Posterior cingulate gyrus (tissue), 11 donors: ENCODE measurements at regions of chr3 and their contacts with region 1.

Region 1: DNA sequence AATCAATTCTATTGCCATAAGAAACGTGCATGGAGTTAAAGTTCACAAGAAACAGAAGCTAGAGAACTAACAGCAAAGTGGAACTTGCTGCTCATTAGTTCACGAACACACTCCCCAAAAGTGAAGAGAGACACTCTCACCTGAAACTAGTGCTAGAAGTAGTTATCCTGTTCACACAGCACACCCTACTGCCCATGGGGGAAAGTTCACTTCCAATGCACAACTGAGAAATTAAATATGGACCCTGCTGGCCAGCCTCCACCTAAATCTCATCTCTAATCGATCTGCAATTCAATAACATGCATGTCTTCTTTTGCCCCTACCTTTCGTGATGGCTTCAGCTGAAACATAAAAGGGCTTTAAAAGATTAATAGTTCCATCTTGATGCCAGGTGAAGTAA is 39.4 kb upstream of the FRMD4B start:
- DNase-seq: peak in 1 of 10 donors; percentile 36

Region 2: GRCh38 chr3:69120879-69121464 is 304.3 kb before region 1 on chr3:
- intact Hi-C with region 1: loop called (anchors 5 kb)
- DNase-seq: peak in 6 of 10 donors; percentile 32 to 77 (median 76)

Region 3: GRCh38 chr3:69306239-69307185 is 118.7 kb before region 1 on chr3:
- intact Hi-C with region 1: loop called (anchors 5 kb)
- DNase-seq: peak; percentile 39 to 95 (median 70)